ENCODE measurements at regions of chr15 and their contacts with region 1.

Region 1: GRCh38 chr15:31488426-31489204 is 162.0 kb downstream of the KLF13 start:
- DNase-seq: peak in 3 of 5 donors; percentile 55 to 66 (median 62)
- H3K4me3 ChIP-seq: no peak overlapping the region
- H3K4me3 Mint-ChIP-seq: peak overlapping the region in 2 of 7 donors; percentile 16 to 49
- H3K27ac ChIP-seq: no peak overlapping the region
- H3K27ac Mint-ChIP-seq: peak overlapping the region in 5 of 8 donors; percentile 14 to 70 (median 50)
- H3K4me1 ChIP-seq: peaks cover 33% of the 10 kb centered on the region
- H3K4me1 Mint-ChIP-seq: peaks cover 26 to 52% (median 40%) of the 10 kb centered on the region in 3 donors
- H3K27me3 ChIP-seq: no peaks in the 10 kb centered on the region
- H3K27me3 Mint-ChIP-seq: peaks cover 0 to 2% of the 10 kb centered on the region in 2 donors

Region 2: GRCh38 chr15:31200735-31201151 is 287.9 kb before region 1 on chr15:
- CTCF ChIA-PET with region 1: interaction called, 106 read pairs
- POLR2A ChIA-PET with region 1: no interaction called
- DNase-seq: peak; percentile 34 to 82 (median 49)
- H3K4me3 ChIP-seq: no peak overlapping the region
- H3K4me3 Mint-ChIP-seq: no peak overlapping the region
- H3K27ac ChIP-seq: no peak overlapping the region
- H3K27ac Mint-ChIP-seq: peak overlapping the region in 2 of 8 donors; percentile 33 to 51
- H3K4me1 ChIP-seq: peaks cover 26% of the 10 kb centered on the region
- H3K4me1 Mint-ChIP-seq: peaks cover 13 to 18% (median 15%) of the 10 kb centered on the region in 3 donors
- H3K27me3 ChIP-seq: no peaks in the 10 kb centered on the region
- H3K27me3 Mint-ChIP-seq: peaks cover 2 to 3% of the 10 kb centered on the region in 2 donors

Region 3: DNA sequence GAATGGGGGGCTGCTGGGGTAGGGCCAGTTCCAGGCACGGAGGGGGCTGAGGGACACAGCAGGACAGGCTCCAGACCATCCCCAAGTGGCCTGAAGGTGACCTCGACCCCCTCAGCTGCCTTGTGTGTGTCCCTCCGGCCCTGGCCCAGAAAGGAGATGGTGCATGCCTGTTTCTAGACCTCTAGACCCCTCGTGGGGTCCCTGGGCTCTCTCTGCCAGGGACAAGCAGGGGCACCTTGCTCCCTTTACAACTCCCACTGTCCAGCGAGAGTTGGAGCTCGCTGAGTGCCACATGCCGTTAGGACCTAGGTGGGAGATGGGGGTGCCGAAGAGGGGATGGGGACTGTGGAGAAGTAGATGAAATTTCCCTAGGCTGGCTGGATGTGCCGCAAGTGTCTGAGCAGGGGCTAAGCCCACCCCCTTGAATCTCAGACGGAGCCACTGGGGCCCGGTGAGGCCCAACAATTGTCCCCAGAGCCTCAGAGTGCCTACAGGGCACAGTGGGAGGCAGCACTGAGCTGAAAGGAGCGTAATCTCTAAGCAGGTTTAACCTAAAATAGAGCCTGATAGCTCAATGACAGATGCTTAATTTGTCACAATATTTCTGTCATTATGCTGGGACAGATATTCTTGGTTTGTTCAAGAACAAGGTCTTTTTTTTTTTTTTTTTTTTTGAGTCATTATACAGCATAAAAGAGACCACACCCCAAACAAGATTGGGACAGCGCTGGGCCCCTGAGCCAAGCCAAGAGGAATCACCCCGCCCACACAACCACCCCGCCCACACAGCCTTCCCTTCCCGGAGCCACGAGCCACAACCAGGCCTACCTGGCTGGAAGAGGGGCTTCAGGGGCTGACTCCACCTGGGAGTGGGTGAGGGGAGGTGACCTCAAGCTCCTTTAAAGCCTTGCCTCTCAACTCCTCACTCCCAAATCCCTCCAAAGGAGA is 185.6 kb before region 1 on chr15:
- CTCF ChIA-PET with region 1: interaction called, 16 read pairs
- POLR2A ChIA-PET with region 1: no interaction called
- DNase-seq: peak in 1 of 5 donors; percentile 24
- H3K4me3 ChIP-seq: no peak overlapping the region
- H3K4me3 Mint-ChIP-seq: no peak overlapping the region
- H3K27ac ChIP-seq: no peak overlapping the region
- H3K27ac Mint-ChIP-seq: peak overlapping the region in 2 of 8 donors; percentile 33 to 38
- H3K4me1 ChIP-seq: peaks cover 13% of the 10 kb centered on the region
- H3K4me1 Mint-ChIP-seq: peaks cover 9 to 32% (median 23%) of the 10 kb centered on the region in 3 donors
- H3K27me3 ChIP-seq: no peaks in the 10 kb centered on the region
- H3K27me3 Mint-ChIP-seq: peaks cover 0 to 9% of the 10 kb centered on the region in 2 donors

Region 4: GRCh38 chr15:31352911-31353811 is 135.5 kb before region 1 on chr15:
- CTCF ChIA-PET with region 1: interaction called, 22 read pairs
- POLR2A ChIA-PET with region 1: no interaction called
- DNase-seq: peak; percentile 37 to 71 (median 67)
- H3K4me3 ChIP-seq: peak overlapping the region; percentile 33
- H3K4me3 Mint-ChIP-seq: peak overlapping the region; percentile 73 to 87 (median 82)
- H3K27ac ChIP-seq: peak overlapping the region; percentile 67
- H3K27ac Mint-ChIP-seq: peak overlapping the region; percentile 90 to 98 (median 96)
- H3K4me1 ChIP-seq: peaks cover 100% of the 10 kb centered on the region
- H3K4me1 Mint-ChIP-seq: peaks cover 96 to 99% (median 98%) of the 10 kb centered on the region in 3 donors
- H3K27me3 ChIP-seq: no peaks in the 10 kb centered on the region
- H3K27me3 Mint-ChIP-seq: peaks cover 0 to 1% of the 10 kb centered on the region in 2 donors

Region 5: DNA sequence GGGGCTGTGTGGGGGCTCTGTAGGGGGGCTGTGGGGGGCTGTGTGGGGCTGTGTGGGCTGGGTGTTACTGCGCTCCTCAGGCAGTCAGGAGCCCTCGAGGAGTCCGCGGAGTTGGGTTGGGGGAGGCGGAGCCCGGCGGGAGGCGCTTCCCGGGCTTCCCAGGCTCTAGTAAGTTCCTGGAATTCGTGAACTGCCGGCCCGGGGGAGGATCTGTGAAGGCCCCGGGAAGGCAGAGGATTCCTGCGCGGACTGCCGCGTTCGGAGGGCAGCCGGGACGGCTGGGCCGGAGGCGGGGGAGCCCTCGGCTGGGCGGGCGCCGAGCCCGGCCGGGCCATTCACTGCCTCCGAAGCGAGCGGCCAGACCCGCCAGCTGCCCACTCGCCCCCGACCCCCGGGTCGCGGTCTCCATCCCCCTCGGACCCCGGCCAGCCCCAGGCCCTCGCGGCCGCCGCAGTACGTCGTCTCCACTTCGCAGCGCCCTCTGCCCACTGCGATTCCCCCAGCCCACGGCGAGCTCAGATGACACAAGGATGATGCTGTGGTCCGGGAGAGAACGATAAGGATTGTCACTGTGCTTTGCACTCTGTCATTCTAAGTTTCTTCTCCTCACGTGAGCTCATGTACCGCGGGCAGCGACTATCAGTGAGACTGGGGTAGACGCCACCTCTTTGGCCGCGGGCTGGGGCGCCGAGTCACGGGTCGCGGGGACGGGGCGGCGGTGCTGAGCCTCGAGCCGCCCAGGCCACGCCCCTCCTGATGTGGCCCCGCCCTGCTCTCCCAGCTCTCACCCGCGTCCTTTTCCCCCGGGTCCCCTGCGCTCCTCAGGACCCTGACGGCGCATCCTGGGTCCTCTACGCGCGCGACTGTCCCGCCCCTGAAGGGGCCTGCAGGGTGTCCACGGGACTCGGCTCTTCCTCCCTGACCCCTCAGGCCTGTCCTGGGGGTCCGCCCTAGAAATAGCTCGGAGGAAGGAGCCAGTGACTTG is 96.6 kb before region 1 on chr15:
- CTCF ChIA-PET with region 1: interaction called, 18 read pairs
- POLR2A ChIA-PET with region 1: interaction called, 15 read pairs
- DNase-seq: peak; percentile 78 to 91 (median 82)
- H3K4me3 ChIP-seq: peak overlapping the region; percentile 87
- H3K4me3 Mint-ChIP-seq: peak overlapping the region; percentile 87 to 98 (median 95)
- H3K27ac ChIP-seq: peak overlapping the region; percentile 73
- H3K27ac Mint-ChIP-seq: peak overlapping the region; percentile 82 to 99 (median 98)
- H3K4me1 ChIP-seq: peaks cover 33% of the 10 kb centered on the region
- H3K4me1 Mint-ChIP-seq: peaks cover 49 to 69% (median 57%) of the 10 kb centered on the region in 3 donors
- H3K27me3 ChIP-seq: no peaks in the 10 kb centered on the region
- H3K27me3 Mint-ChIP-seq: peaks cover 0 to 1% of the 10 kb centered on the region in 2 donors

Region 6: DNA sequence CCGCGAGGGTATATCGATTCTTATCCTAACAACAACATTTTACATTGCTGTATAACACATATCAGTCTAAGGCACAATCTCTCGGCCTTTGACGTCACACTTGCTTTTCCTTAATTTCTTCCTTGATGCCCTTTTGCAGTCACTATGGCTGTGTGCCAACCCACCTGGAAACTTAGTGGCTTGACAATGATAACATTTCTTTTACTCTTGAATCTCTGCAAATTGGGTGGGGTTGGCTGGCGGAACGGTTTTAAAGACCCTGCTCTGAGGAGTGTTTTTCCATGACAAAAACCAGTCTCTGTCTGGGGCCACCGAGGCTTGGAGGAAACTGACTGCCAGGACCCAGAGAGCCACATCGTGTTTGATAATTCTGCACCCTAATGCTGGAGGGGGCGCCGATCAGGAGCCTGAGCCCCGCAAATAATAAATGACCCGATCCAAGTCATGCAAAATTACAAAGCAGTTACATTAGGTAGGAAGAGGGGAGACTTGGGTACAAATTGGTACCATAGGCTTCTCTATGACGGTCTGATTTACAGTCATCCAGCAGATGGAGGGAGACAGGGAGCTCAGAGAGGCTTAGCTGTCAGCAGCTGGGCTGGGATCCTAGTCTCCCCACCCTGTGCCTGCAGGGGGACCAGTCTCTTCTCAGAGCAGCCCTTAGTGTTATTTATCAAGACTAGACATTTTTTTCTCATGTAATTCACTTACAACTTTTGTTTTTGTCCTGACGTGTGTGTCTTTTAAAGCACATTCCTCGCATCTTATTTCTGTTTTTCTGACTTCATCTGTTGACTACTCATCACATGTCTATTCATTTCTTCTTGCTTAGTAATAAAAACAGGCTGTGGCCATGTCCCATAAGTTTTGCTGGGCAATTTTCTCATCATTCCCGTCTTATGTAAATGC is 46.2 kb before region 1 on chr15:
- CTCF ChIA-PET with region 1: interaction called, 68 read pairs
- POLR2A ChIA-PET with region 1: interaction called, 6 read pairs
- DNase-seq: no peak
- H3K4me3 ChIP-seq: no peak overlapping the region
- H3K4me3 Mint-ChIP-seq: peak overlapping the region; percentile 64 to 89 (median 74)
- H3K27ac ChIP-seq: no peak overlapping the region
- H3K27ac Mint-ChIP-seq: peak overlapping the region; percentile 44 to 85 (median 68)
- H3K4me1 ChIP-seq: peaks cover 38% of the 10 kb centered on the region
- H3K4me1 Mint-ChIP-seq: peaks cover 48 to 63% (median 51%) of the 10 kb centered on the region in 3 donors
- H3K27me3 ChIP-seq: no peaks in the 10 kb centered on the region
- H3K27me3 Mint-ChIP-seq: no peaks in the 10 kb centered on the region

Measured in CD8-positive, alpha-beta memory T cell (primary cell).